ENCODE measurements at regions of chr15 and their contacts with region 1.

Region 1: DNA sequence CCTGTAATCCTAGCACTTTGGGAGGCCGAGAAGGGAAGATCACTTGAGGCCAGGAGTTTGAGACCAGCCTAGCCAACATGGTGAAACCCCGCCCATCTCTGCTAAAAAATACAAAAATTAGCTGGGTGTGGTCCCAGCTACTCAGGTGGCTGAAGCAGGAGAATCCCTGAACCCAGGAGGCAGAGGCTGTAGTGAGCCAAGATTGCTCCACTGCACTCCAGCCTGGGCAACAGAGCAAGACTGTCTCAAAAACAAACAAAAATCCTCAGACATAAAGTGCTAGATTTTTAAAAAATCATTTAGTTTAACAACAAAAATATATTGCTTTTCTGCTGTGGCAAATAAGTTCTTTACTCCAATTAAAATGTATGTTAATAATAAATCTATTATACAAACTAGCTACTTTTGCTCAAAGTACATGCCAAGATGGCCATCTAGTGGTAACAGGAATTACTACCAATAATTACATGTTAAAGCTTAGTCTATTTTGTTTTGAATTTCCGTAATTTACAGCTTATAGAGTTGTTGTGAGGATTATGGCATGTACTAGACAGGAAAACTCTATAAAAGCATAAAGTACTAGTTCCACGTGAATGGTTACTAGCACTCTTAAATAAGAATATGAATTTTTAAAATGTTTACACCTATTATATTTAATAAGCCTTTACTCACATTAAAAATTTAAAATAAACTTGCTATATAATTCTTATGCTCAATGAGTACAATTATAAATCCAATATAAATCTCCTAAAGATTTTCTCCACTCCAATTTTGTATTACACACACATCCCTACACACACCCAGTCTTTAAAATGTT is 39.0 kb downstream of the GABPB1 start:
- DNase-seq: no peak
- H3K4me3 ChIP-seq: no peak overlapping the region
- H3K27ac ChIP-seq: no peak overlapping the region
- H3K4me1 ChIP-seq: no peaks in the 10 kb centered on the region
- H3K27me3 ChIP-seq: no peaks in the 10 kb centered on the region
- CTCF ChIP-seq: peak; percentile 54

Region 2: GRCh38 chr15:50182219-50183013 is 133.6 kb before region 1 on chr15:
- intact Hi-C with region 1: loop called (anchors 10 kb)
- DNase-seq: peak; percentile 25
- H3K4me3 ChIP-seq: peak overlapping the region; percentile 82
- H3K27ac ChIP-seq: peak overlapping the region; percentile 60
- H3K4me1 ChIP-seq: no peaks in the 10 kb centered on the region
- H3K27me3 ChIP-seq: peaks cover 3% of the 10 kb centered on the region
- CTCF ChIP-seq: no peak